ENCODE measurements at regions of chr1 and their contacts with region 1.

Region 1: DNA sequence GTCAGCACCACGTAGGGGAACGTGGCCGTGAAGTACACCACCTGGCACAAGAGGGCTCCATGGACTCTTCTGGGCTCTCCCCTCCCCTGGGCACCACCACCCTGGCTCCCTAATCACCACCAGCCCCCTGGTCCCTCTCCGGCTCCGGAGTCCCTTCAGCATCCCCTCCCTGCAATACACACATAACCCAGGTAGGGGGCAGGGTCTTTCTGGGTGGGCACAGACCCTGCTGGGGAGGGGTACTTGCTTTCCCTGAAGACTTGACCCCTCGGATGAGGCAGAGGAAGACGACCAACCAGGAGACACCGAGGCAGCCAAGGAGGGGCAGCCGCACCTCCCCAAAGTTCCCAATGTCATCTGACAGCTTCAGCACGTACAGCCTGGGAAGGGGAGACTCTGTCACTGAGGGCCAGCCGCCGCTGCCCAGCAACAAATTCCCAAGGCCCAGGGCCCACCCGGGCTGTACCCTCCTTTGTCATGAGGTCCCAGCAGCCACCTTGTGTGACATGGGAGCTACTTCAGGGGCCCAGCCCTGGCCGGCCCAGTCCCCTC is 11.3 kb downstream of the CCDC24 start:
- DNase-seq: no peak
- H3K4me3 ChIP-seq: no peak overlapping the region
- CTCF ChIP-seq: no peak

Region 2: GRCh38 chr1:43974443-43975248 is 28.0 kb before region 1 on chr1 and contains the start of gene ATP6V0B:
- CTCF ChIA-PET with region 1: interaction called, 10 read pairs
- POLR2A ChIA-PET with region 1: no interaction called
- DNase-seq: peak; percentile 28
- H3K4me3 ChIP-seq: peak within 1 kb of the TSS; percentile 85
- CTCF ChIP-seq: peak; percentile 36

Region 3: GRCh38 chr1:44012941-44013609 is 10.4 kb after region 1 on chr1:
- CTCF ChIA-PET with region 1: interaction called, 170 read pairs
- POLR2A ChIA-PET with region 1: no interaction called
- DNase-seq: no peak
- H3K4me3 ChIP-seq: no peak overlapping the region
- CTCF ChIP-seq: no peak

Region 4: GRCh38 chr1:44036409-44037139 is 33.9 kb after region 1 on chr1:
- CTCF ChIA-PET with region 1: interaction called, 313 read pairs
- POLR2A ChIA-PET with region 1: no interaction called
- DNase-seq: no peak
- H3K4me3 ChIP-seq: no peak overlapping the region
- CTCF ChIP-seq: peak; percentile 78

Region 5: DNA sequence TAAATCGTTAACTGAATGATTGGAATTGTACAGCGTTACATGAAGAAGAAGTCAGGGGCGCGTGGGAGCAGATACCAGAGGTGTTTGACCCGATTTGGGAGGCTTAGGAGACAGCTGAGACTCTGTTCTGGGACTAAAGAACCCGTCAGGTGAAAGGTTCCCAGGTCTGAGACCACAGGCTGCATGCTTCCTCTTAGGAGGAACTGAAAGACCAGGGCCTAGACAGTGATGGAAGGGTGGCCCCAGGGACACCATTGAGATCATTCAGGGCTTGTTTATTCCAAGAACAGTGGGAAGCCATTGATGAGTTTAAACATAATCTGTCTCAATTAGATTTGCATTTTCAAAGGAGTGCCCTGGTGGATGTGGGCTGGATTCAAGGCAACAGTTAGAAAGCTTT is 116.8 kb after region 1 on chr1:
- CTCF ChIA-PET with region 1: interaction called, 12 read pairs
- POLR2A ChIA-PET with region 1: no interaction called
- DNase-seq: no peak
- H3K4me3 ChIP-seq: no peak overlapping the region
- CTCF ChIP-seq: no peak

Region 6: GRCh38 chr1:44144962-44145756 is 142.5 kb after region 1 on chr1:
- CTCF ChIA-PET with region 1: no interaction called
- POLR2A ChIA-PET with region 1: no interaction called
- DNase-seq: no peak
- H3K4me3 ChIP-seq: no peak overlapping the region
- CTCF ChIP-seq: no peak

Region 7: DNA sequence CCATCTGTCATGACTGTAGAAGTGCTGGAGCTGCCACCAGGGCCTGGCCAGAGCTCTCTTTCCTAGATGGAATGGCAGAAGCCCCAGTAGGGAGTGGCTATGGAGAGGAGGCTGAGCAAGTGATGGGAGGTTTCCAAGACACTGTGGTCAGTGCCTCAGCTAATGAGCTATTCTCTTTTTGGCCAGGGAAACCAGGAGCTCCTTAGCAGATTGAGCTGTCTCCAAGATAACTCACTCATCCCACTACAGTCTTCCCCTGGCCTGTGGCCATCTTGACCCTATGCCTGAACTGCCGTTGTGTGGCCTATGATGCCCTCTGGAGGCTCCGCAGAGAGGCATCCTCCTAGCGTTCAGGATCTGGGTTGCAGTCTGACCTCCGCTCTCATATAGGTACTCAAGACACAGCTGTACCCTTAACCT is 291.9 kb after region 1 on chr1:
- CTCF ChIA-PET with region 1: interaction called, 12 read pairs
- POLR2A ChIA-PET with region 1: no interaction called
- DNase-seq: peak; percentile 38
- H3K4me3 ChIP-seq: no peak overlapping the region
- CTCF ChIP-seq: peak; percentile 51

Measured in AG04449 (cell line).